ENCODE measurements at regions of chr10 and their contacts with region 1.

Region 1: DNA sequence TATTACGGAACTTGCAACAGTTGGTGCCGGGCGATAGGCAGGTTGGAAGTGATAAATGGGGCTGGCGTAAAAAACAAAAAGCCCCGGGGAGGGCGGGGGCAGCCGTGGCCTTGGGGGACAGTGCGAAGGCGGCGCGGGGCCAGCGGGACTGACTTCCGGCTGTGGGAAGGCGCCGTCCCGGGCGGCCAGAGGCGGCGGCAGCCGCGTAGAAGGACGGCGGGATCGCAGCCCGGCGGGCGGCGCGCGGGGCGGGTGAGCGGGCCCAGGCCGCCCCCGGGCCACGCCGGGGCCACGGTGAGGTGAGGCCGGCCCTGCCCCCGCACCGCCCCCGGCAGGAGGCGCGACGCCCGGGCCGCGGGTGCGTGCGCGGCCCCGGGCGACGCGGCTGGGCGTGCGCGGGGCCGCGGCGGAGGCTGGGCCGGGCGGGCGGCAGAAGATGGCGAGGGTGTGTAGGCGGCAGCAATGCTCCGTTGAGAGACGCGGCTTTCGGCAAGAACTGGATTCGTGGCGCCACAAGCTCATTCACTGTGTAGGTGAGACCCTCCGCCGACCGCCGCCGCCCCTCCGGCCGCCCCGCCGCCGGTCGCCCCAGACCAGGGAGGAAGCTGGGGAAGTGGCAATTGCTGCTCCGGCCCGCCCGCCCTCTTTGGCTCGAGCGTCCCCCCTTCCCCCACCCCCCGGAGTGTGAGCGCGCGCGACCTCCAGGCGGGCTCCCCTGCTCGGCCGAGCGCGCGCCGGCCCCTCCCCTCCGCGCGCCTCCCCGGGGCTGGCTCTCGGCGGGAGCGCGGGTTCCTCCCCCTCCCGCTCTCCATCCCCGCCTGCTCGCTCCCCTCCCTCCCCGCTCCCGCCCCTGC is at the start of gene LCOR:
- DNase-seq: peak; percentile 83
- H3K4me3 Mint-ChIP-seq: peak within 1 kb of the TSS; percentile 88
- H3K27ac Mint-ChIP-seq: peak within 1 kb of the TSS; percentile 94
- H3K4me1 Mint-ChIP-seq: peaks cover 43% of the 10 kb centered on the region
- H3K27me3 Mint-ChIP-seq: no peaks in the 10 kb centered on the region
- total RNA-seq, gene LCOR: 18.1 to 22.9 TPM

Region 2: GRCh38 chr10:96513698-96514561 is 318.2 kb before region 1 on chr10 and contains the start of gene TLL2:
- CTCF ChIA-PET with region 1: no interaction called
- intact Hi-C with region 1: loop called (anchors 2 kb)
- DNase-seq: peak; percentile 69
- H3K4me3 Mint-ChIP-seq: peak within 1 kb of the TSS; percentile 61
- H3K27ac Mint-ChIP-seq: no peak within 1 kb of the TSS
- H3K4me1 Mint-ChIP-seq: peaks cover 14% of the 10 kb centered on the region
- H3K27me3 Mint-ChIP-seq: peaks cover 44% of the 10 kb centered on the region
- total RNA-seq, gene TLL2: 0.07 TPM in 1 of 2 experiments, not detected in the other

Region 3: GRCh38 chr10:96719850-96720421 is 112.2 kb before region 1 on chr10:
- CTCF ChIA-PET with region 1: no interaction called
- intact Hi-C with region 1: loop called (anchors 2 kb)
- DNase-seq: peak; percentile 64
- H3K4me3 Mint-ChIP-seq: peak overlapping the region; percentile 84
- H3K27ac Mint-ChIP-seq: peak overlapping the region; percentile 22
- H3K4me1 Mint-ChIP-seq: peaks cover 6% of the 10 kb centered on the region
- H3K27me3 Mint-ChIP-seq: peaks cover 3% of the 10 kb centered on the region

Region 4: GRCh38 chr10:96873756-96874467 is 41.8 kb after region 1 on chr10:
- CTCF ChIA-PET with region 1: no interaction called
- intact Hi-C with region 1: loop called (anchors 2 kb)
- DNase-seq: no peak
- H3K4me3 Mint-ChIP-seq: no peak overlapping the region
- H3K27ac Mint-ChIP-seq: peak overlapping the region; percentile 84
- H3K4me1 Mint-ChIP-seq: peaks cover 57% of the 10 kb centered on the region
- H3K27me3 Mint-ChIP-seq: no peaks in the 10 kb centered on the region

Region 5: GRCh38 chr10:96978621-96979154 is 146.6 kb after region 1 on chr10:
- CTCF ChIA-PET with region 1: no interaction called
- intact Hi-C with region 1: loop called (anchors 2 kb)
- DNase-seq: peak; percentile 28
- H3K4me3 Mint-ChIP-seq: no peak overlapping the region
- H3K27ac Mint-ChIP-seq: peak overlapping the region; percentile 4
- H3K4me1 Mint-ChIP-seq: peaks cover 11% of the 10 kb centered on the region
- H3K27me3 Mint-ChIP-seq: no peaks in the 10 kb centered on the region

Region 6: DNA sequence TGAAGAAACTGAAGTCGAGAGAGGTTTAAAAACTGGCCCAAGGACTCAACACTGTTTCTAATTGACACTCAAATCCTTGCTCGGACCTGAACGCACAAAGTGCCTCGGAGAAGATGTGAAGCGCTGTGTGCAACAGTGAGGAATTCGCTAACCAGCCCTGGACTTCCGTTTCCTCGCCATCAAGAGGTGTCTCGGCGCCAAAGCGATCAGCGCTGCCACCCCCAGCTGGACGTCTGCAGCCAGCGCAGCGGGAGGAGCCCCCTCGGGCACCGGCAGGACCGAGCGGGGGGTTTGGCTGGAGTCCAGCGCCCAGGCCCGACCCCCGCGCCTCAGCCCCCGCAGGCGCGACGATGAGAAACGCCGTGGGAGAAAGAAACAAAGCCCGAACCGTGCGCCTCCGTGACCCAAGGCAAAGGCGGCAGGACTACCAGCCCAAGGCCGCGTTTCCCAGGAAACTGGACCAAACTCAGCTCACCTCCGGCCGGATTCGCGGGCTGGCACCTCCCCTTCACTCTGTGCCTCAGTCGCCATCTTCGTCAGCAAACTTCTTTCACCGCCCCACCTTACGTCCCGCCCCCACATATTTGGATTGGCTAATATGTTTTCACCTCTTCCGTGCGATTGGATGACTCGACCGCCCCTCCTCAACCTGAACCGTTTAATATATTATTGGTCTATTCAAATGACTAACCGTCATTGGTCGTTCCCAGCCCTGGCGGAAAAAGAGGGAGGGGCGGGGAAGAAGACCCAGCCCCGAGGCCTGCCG is 460.2 kb after region 1 on chr10 and contains the start of gene ARHGAP19:
- CTCF ChIA-PET with region 1: no interaction called
- intact Hi-C with region 1: loop called (anchors 2 kb)
- DNase-seq: peak; percentile 98
- H3K4me3 Mint-ChIP-seq: peak within 1 kb of the TSS; percentile 91
- H3K27ac Mint-ChIP-seq: peak within 1 kb of the TSS; percentile 88
- H3K4me1 Mint-ChIP-seq: peaks cover 23% of the 10 kb centered on the region
- H3K27me3 Mint-ChIP-seq: no peaks in the 10 kb centered on the region
- total RNA-seq, gene ARHGAP19: 76.7 to 91.9 TPM

Region 7: DNA sequence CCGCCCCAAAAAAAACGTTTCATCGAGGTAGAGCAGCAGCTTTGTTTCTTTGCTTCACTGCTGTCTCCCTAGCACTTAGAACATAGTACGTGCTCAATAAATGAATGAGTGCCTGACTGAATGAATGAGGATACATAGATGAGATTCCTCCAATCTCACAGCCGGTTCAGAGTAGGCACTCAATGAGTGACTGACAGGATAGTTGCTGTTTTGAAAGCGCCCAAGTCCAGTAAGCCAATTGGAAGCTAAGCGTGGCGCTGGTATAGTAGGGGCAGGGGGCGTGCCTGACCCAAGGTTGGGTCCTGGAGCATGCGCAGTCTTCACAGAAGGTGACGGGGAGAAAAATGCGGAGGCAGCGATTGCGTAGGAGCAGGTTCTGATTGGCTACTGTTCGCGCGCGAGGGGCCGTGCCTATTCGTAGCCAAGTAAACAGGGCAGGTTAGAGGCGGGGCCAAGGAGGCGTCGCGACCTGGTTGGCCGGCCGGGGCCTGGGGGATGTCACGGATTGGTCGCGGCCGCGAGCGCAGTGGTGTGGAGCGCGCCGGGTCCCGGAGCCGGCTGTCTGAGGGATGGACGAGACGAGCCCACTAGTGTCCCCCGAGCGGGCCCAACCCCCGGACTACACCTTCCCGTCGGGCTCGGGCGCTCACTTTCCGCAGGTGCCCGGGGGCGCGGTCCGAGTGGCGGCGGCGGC is 808.2 kb after region 1 on chr10 and contains the start of gene PI4K2A:
- CTCF ChIA-PET with region 1: no interaction called
- intact Hi-C with region 1: loop called (anchors 2 kb)
- DNase-seq: peak; percentile 100
- H3K4me3 Mint-ChIP-seq: peak within 1 kb of the TSS; percentile 93
- H3K27ac Mint-ChIP-seq: peak within 1 kb of the TSS; percentile 73
- H3K4me1 Mint-ChIP-seq: peaks cover 18% of the 10 kb centered on the region
- H3K27me3 Mint-ChIP-seq: no peaks in the 10 kb centered on the region
- total RNA-seq, gene PI4K2A: 8.9 to 9.4 TPM